ENCODE measurements at regions of chr11 and their contacts with region 1.

Region 1: GRCh38 chr11:65013692-65014145 is 241 bp upstream of the ARL2 start:
- DNase-seq: peak; percentile 74
- H3K4me3 ChIP-seq: peak overlapping the region; percentile 64 to 85 (median 72)
- H3K27ac ChIP-seq: peak overlapping the region; percentile 90
- H3K4me1 ChIP-seq: peaks cover 11% of the 10 kb centered on the region
- H3K27me3 ChIP-seq: no peaks in the 10 kb centered on the region
- CTCF ChIP-seq: no peak

Region 2: DNA sequence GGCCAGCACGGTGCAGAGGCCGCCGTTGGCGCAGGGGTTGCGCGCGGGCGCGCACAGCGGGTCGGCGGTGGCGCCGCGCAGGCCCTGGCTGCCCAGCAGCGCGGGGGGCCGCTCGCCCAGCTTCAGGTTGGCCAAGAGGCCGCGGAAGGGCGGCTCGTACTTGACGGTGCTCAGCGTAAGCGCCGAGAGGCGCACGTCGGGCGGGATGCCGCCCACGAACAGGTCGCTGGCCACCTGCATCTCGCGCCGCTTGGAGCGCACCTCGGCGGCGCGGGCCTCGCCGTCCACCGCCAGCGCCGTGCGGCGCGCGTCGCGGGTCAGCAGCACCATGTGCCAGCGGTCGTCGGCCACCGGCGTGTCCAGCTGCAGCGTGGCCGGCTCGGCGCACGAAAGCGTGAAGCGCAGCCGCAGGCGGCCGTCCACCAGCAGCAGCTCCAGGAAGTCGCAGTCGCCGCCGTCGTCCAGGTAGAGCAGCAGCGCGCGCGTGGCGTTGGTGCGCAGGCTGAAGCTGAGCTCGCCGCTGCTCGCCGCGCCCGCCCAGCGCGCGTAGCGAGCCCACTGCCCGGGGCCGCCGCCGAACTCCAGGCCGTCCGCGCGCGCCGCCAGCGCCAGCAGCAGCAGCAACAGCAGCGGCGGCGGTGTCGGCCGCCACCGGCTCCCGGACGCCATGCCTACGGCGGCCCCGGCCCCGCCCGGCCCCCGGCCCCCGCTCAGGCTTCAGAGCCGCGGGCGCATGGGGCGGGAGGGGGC is 300.5 kb before region 1 on chr11:
- CTCF ChIA-PET with region 1: no interaction called
- dilution Hi-C with region 1: no loop called
- in situ Hi-C with region 1: no loop called
- intact Hi-C with region 1: no loop called
- DNase-seq: peak; percentile 39
- H3K4me3 ChIP-seq: no peak overlapping the region
- H3K27ac ChIP-seq: no peak overlapping the region
- H3K4me1 ChIP-seq: no peaks in the 10 kb centered on the region
- H3K27me3 ChIP-seq: peaks cover 21% of the 10 kb centered on the region
- CTCF ChIP-seq: no peak

Region 3: DNA sequence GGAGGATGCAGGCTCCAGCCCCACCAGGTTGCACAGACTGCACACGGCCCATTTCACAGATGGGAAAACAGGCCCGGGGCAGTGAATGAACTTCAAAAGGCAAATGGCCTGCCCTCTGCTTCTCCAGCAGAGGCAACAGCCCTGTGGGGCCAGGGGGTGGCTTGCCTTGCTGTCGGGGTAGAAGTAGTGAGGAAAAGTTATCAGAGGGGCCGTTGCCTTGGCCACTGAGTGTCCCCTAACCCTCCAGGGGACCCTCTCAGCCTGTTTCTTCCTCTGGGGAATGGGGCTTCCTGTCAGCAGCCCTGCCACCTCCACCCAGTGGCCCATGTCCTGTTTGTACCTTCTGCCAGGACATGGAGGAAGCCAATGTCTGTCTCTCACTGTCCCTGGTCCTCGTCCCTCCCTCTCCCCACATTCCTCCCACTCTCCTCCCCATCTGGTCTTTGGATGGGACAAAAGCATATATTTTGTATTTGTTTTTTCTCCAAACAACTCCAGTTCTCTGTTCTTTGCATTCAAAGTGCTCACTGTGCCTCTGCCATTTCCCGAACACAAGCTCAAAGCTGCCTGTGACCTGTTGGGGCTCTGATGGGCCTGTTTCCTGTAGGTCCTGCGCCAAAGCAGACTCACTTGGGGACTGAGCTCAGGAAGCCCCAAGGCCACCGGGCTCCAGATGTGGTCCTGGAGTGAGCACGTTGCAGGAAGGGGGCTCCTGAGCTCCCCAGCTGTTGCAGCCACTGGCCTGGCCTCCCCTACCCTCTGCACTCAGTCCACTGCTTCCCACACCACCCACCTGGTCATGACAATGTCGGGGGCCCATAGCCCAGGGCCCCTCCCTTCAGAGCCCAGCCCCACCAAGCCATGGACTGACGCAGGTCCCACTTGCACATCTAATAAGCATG is 220.2 kb before region 1 on chr11:
- CTCF ChIA-PET with region 1: no interaction called
- dilution Hi-C with region 1: loop called (anchors 5 kb)
- in situ Hi-C with region 1: no loop called
- intact Hi-C with region 1: no loop called
- DNase-seq: no peak
- H3K4me3 ChIP-seq: no peak overlapping the region
- H3K27ac ChIP-seq: no peak overlapping the region
- H3K4me1 ChIP-seq: no peaks in the 10 kb centered on the region
- H3K27me3 ChIP-seq: no peaks in the 10 kb centered on the region
- CTCF ChIP-seq: no peak

Region 4: GRCh38 chr11:64894070-64894796 is 119.5 kb before region 1 on chr11:
- CTCF ChIA-PET with region 1: no interaction called
- dilution Hi-C with region 1: no loop called
- in situ Hi-C with region 1: no loop called
- intact Hi-C with region 1: no loop called
- DNase-seq: peak; percentile 39
- H3K4me3 ChIP-seq: no peak overlapping the region
- H3K27ac ChIP-seq: no peak overlapping the region
- H3K4me1 ChIP-seq: no peaks in the 10 kb centered on the region
- H3K27me3 ChIP-seq: no peaks in the 10 kb centered on the region
- CTCF ChIP-seq: peak; percentile 79 to 92

Region 5: GRCh38 chr11:64935359-64936081 is 78.2 kb before region 1 on chr11 and contains the start of gene GPHA2:
- CTCF ChIA-PET with region 1: no interaction called
- dilution Hi-C with region 1: loop called (anchors 5 kb)
- in situ Hi-C with region 1: loop called in 1 of 2 experiments (anchors 10 kb)
- intact Hi-C with region 1: no loop called
- DNase-seq: no peak
- H3K4me3 ChIP-seq: no peak within 1 kb of the TSS
- H3K27ac ChIP-seq: no peak within 1 kb of the TSS
- H3K4me1 ChIP-seq: no peaks in the 10 kb centered on the region
- H3K27me3 ChIP-seq: no peaks in the 10 kb centered on the region
- CTCF ChIP-seq: no peak
- total RNA-seq, gene GPHA2: not detected

Region 6: DNA sequence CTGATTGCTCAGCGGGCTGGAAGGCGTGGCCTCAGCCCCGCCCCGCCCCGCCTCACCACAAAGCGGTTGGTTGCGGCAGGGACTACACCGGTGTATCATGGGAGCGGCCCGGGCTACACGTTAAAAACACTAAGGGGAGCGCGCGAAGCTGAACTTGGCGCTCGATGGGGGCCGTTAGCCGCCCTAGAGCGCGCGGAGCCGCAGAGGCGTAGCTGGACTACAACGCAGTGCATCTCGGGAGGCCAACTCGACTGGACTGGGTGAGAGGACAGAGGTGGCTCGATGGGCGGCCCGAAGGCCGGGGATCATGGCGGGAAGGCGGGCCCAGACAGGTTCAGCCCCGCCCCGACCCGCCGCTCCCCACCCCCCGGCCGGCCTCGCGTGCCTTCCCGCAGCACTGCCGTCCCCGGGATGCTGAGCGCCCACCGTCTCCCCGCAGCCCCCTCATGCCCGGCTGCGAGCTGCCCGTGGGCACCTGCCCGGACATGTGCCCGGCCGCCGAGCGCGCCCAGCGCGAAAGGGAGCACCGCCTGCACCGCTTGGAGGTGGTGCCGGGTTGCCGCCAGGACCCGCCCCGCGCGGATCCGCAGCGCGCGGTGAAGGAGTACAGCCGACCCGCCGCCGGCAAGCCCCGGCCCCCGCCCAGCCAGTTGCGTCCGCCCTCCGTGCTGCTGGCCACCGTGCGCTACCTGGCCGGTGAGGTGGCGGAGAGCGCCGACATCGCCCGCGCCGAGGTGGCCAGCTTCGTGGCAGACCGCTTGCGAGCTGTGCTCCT is 27.3 kb after region 1 on chr11 and contains the start of gene SAC3D1:
- CTCF ChIA-PET with region 1: interaction called, 3 read pairs
- dilution Hi-C with region 1: no loop called
- in situ Hi-C with region 1: no loop called
- intact Hi-C with region 1: loop called (anchors 2 kb)
- DNase-seq: peak; percentile 97
- H3K4me3 ChIP-seq: peak within 1 kb of the TSS; percentile 43 to 89 (median 80)
- H3K27ac ChIP-seq: peak within 1 kb of the TSS; percentile 9
- H3K4me1 ChIP-seq: peaks cover 16% of the 10 kb centered on the region
- H3K27me3 ChIP-seq: no peaks in the 10 kb centered on the region
- CTCF ChIP-seq: no peak
- total RNA-seq, gene SAC3D1: 13.2 to 25.1 TPM

Region 7: DNA sequence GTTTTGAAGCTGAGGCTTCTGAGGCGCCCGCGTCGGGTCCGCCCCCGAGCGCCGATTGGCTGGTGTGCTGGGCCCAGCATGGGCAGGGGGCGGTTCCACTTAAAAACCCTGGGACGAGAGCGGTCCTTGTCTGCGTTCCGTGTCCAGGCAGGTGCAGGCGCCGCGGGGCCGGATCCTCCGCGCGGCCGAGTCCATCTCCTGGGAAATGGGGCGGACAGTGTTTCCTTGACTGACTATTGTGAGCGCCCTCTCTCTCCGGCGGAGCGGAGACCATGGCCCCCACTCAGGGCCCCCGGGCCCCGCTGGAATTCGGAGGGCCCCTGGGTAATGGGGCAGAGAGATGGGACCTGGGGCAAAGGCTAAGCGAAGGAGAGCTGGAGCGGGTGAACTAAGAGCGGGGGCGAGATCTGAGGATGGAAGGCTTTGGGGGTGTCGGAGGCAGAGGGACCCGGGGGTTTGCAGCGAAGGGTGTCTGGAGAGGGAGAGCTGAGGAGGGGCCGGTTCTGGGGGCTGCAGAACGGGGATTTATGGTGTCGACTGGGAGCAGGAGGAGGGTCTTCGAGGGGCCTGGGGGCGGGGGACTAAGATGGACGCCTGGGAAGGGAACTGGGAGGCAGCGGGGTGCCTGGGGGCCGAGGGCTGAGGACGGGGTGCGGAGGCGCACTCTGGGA is 98.2 kb after region 1 on chr11 and contains the start of gene TM7SF2:
- CTCF ChIA-PET with region 1: no interaction called
- dilution Hi-C with region 1: no loop called
- in situ Hi-C with region 1: no loop called
- intact Hi-C with region 1: loop called (anchors 1 kb)
- DNase-seq: peak; percentile 93
- H3K4me3 ChIP-seq: peak within 1 kb of the TSS; percentile 45 to 51 (median 49)
- H3K27ac ChIP-seq: no peak within 1 kb of the TSS
- H3K4me1 ChIP-seq: peaks cover 38% of the 10 kb centered on the region
- H3K27me3 ChIP-seq: no peaks in the 10 kb centered on the region
- CTCF ChIP-seq: no peak
- total RNA-seq, gene TM7SF2: 8.7 to 10.1 TPM

Region 8: DNA sequence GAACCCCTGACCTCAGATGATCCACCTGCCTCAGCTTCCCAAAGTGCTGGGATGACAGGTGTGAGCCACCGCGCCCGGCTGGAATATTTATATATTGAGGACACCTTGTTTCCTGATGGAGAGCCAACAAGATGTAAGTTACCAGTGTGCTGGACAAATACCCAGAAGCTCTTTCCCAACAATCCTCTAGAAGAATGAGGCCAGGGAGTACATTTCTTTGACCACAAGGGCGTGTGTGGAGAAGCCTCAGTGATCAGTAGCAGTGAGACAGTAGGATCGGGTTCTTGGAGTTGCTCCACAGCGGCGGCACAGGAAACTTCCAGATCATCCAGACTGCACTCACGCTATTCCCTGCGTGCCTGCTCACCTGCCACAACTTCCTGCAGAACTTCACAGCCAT is 237.8 kb after region 1 on chr11:
- CTCF ChIA-PET with region 1: no interaction called
- dilution Hi-C with region 1: no loop called
- in situ Hi-C with region 1: no loop called
- intact Hi-C with region 1: loop called (anchors 5 kb)
- DNase-seq: no peak
- H3K4me3 ChIP-seq: no peak overlapping the region
- H3K27ac ChIP-seq: no peak overlapping the region
- H3K4me1 ChIP-seq: no peaks in the 10 kb centered on the region
- H3K27me3 ChIP-seq: no peaks in the 10 kb centered on the region
- CTCF ChIP-seq: no peak

Region 9: GRCh38 chr11:65558002-65558931 is 544.5 kb after region 1 on chr11 and contains the start of gene LTBP3:
- CTCF ChIA-PET with region 1: no interaction called
- dilution Hi-C with region 1: no loop called
- in situ Hi-C with region 1: no loop called
- intact Hi-C with region 1: no loop called
- DNase-seq: peak; percentile 77
- H3K4me3 ChIP-seq: peak within 1 kb of the TSS; percentile 32 to 56 (median 44)
- H3K27ac ChIP-seq: peak within 1 kb of the TSS; percentile 56
- H3K4me1 ChIP-seq: peaks cover 69% of the 10 kb centered on the region
- H3K27me3 ChIP-seq: no peaks in the 10 kb centered on the region
- CTCF ChIP-seq: no peak
- total RNA-seq, gene LTBP3: 21.0 to 42.5 TPM